ENCODE measurements at regions of chr12 and their contacts with region 1.

Region 1: DNA sequence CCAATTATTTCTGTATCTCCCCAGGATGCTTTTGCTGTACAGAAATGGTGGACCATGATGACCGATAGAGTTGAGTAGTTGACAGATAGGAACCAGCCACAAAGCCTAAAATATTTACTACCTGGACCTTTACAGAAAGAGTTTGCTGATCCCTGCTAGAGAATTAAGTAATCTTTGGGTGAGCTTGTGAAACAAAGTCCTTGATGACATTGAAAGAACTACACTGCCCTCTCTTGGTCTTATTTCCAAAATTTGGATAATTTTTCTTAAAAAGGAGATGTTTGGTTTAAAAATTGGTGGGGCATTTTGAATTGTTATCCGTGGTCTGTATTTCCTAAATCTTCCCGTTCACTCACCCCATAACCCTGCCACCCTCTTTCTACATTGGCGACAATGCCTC is 13.7 kb upstream of the TCTN1 start:
- DNase-seq: no peak
- ATAC-seq: peak; percentile 35
- H3K4me3 Mint-ChIP-seq: no peak overlapping the region
- H3K27ac Mint-ChIP-seq: peak overlapping the region; percentile 13
- H3K4me1 Mint-ChIP-seq: peaks cover 9% of the 10 kb centered on the region
- H3K27me3 Mint-ChIP-seq: no peaks in the 10 kb centered on the region

Region 2: GRCh38 chr12:110431957-110432587 is 168.2 kb before region 1 on chr12:
- CTCF ChIA-PET with region 1: interaction called, 19 read pairs
- POLR2A ChIA-PET with region 1: no interaction called
- intact Hi-C with region 1: no loop called
- DNase-seq: peak; percentile 54
- ATAC-seq: peak; percentile 45
- H3K4me3 Mint-ChIP-seq: peak overlapping the region; percentile 93
- H3K27ac Mint-ChIP-seq: no peak overlapping the region
- H3K4me1 Mint-ChIP-seq: peaks cover 11% of the 10 kb centered on the region
- H3K27me3 Mint-ChIP-seq: no peaks in the 10 kb centered on the region

Region 3: GRCh38 chr12:110508071-110508586 is 92.1 kb before region 1 on chr12:
- CTCF ChIA-PET with region 1: interaction called, 240 read pairs
- POLR2A ChIA-PET with region 1: no interaction called
- intact Hi-C with region 1: loop called (anchors 1 kb)
- DNase-seq: no peak
- ATAC-seq: no peak
- H3K4me3 Mint-ChIP-seq: no peak overlapping the region
- H3K27ac Mint-ChIP-seq: no peak overlapping the region
- H3K4me1 Mint-ChIP-seq: no peaks in the 10 kb centered on the region
- H3K27me3 Mint-ChIP-seq: no peaks in the 10 kb centered on the region

Region 4: DNA sequence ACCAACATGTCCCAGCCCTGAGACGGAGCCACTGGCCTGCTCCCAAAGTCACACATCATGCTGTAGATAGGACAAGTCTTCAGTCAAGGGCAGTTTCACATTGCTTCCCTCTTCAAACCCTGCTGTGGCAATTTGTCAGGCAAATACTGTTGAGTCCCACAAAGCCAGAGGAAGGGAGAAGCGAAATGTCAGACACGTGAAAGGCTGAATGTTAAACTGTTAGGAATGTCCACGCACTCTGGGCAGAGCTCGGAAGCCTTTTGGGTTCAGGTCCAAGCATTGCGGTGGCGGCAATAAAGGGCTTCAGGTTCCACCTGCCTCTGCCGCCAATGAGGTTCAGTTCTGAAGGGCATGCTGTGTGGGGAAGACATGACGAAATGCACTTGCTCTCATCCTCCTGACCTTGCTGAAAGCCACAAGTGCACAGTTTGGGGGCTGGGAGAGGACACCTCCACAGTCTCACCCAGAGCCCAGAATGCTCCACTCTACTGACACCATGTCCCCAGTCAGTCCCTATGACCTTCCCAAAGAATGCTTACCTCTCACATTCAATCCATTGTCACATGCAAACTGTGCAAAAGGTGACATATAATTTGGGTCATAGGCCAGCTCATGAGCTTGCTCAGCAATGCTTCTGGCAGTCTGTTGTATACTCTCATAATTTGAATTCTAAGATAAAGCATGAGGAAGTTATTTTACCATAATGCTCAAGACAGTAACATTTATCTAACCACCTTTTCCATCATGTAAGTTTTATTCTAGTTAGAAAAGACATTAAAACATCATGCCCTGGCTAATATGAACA is 62.4 kb before region 1 on chr12:
- CTCF ChIA-PET with region 1: interaction called, 38 read pairs
- POLR2A ChIA-PET with region 1: no interaction called
- intact Hi-C with region 1: no loop called
- DNase-seq: no peak
- ATAC-seq: no peak
- H3K4me3 Mint-ChIP-seq: no peak overlapping the region
- H3K27ac Mint-ChIP-seq: no peak overlapping the region
- H3K4me1 Mint-ChIP-seq: peaks cover 27% of the 10 kb centered on the region
- H3K27me3 Mint-ChIP-seq: no peaks in the 10 kb centered on the region

Region 5: DNA sequence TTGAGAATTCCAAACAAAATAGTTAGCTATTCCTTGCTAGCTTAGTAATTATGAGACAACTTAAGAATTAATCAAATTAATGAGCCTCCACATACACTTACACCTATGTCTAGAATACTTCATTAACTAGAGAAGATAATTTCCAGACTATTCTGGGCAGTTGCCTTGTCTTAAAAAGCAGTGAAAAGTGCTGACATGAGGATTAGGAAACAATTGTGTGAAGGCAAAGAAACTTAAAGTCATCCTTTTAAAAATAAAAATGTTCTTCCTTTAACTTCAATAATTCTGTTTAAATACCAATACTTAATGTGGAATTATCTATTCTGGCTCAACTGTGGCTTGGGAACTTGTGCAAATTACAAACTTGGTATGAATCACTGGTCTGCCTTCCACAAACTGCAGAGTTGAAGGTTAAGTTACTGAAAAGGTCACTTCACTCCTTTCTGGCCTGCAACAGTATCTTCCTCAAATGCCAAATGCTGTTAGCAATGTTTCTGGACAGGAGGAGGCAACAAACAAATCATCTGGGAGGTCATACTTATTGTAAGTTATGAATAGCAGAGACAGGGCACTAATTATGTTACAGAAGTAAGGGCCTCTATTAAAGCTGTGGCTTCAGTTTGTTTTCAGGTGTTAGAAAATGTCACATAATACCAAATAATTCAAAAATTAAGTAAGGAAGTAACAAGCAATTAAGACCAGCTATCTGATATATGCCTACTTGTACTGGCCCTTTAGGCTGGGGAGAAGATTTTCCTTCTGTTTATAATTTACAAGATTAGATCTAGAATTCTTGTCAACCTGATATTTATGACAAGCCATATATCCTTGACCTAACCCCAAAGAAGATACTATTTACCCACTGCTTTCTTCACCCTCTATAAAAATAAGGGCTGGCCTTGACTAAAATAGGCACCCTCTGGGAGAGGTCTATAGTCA is 36.3 kb before region 1 on chr12:
- CTCF ChIA-PET with region 1: interaction called, 57 read pairs
- POLR2A ChIA-PET with region 1: interaction called, 6 read pairs
- intact Hi-C with region 1: no loop called
- DNase-seq: no peak
- ATAC-seq: no peak
- H3K4me3 Mint-ChIP-seq: no peak overlapping the region
- H3K27ac Mint-ChIP-seq: peak overlapping the region; percentile 76
- H3K4me1 Mint-ChIP-seq: peaks cover 73% of the 10 kb centered on the region
- H3K27me3 Mint-ChIP-seq: no peaks in the 10 kb centered on the region

Region 6: DNA sequence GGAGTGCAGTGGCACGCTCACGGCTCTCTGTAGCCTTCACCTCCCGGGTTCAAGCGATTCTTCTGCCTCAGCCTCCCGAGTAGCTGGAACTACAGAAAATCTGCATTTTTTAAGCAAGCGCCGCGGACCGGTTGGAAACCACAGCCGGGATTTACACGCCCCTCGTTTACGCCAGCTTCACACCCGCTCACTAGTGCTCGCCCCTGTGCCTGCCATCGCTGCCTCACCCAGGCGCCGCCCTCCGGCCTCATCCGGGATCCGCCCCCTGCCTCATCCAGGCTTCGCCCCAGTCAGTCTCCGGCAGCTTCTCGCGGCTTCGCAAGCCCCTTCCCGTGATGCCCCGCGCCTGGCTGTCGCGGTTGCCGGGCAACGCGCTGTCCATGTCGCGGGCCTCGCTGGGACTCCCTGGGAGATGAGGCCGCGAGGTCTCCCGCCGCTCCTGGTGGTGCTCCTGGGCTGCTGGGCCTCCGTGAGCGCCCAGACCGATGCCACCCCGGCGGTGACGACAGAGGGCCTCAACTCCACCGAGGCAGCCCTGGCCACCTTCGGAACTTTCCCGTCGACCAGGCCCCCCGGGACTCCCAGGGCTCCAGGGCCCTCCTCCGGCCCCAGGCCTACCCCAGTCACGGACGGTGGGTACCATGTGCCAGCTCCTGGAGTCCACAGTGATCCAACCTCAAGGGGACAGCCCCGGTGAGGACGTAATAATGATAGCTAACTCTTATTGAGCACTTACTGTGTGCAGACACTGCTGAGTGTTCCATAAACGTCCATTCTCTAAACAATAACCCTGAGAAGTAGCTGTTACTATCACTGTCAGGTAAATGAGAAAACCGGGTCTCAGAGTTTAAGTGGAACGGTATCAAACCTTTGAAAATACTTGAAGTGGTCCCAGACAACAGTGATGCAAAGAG is 13.8 kb after region 1 on chr12 and contains the start of gene TCTN1:
- CTCF ChIA-PET with region 1: interaction called, 21 read pairs
- POLR2A ChIA-PET with region 1: no interaction called
- intact Hi-C with region 1: no loop called
- DNase-seq: peak; percentile 99
- ATAC-seq: peak; percentile 99
- H3K4me3 Mint-ChIP-seq: peak within 1 kb of the TSS; percentile 78
- H3K27ac Mint-ChIP-seq: peak within 1 kb of the TSS; percentile 67
- H3K4me1 Mint-ChIP-seq: peaks cover 12% of the 10 kb centered on the region
- H3K27me3 Mint-ChIP-seq: no peaks in the 10 kb centered on the region
- total RNA-seq, gene TCTN1: 7.2 to 7.3 TPM

Measured in activated CD4-positive, alpha-beta T cell treated with anti-CD3 and anti-CD28 coated beads for 36 hours (primary cell).